ENCODE measurements at regions of chr12 and their contacts with region 1.

Region 1: DNA sequence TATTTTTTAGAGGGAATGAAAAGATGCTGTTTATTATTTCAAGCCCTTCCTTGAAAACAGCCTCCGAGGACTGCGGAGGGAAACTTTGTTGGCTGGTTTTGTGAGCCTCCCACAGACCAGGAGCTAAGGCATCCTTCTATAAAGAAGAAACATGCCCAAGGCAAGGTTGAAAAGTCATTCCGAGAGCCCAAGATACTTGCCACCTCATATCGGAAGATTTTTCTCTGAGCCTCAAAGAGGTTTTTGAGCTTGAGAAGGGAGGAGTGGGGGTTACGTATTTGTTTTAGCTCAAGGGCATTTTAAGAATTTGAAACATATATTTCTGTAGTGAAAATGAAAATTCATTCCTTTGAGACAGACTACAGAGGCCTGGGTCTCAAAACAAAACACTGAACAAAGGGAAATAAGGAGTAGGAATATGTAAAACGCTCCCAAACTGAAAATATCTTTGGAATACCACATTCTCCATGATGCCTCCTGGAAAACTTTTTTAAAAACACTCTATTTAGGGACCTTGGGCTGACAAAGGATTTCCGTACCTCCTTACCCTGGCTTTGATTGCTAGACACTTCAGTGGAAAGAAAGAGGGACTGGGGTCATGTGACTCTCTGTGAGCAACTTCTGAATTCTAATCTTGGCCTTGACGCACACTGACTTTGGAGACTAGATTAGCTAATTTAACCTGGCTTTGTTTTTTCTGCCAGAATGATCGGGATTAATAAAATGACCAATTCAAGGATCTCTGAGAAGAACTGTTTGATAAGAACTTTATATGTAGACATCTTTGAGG is 180.9 kb downstream of the SRGAP1 start:
- DNase-seq: peak; percentile 28
- H3K4me3 ChIP-seq: no peak overlapping the region
- H3K27ac ChIP-seq: no peak overlapping the region
- H3K4me1 ChIP-seq: no peaks in the 10 kb centered on the region
- H3K27me3 ChIP-seq: no peaks in the 10 kb centered on the region
- CTCF ChIP-seq: no peak

Region 2: DNA sequence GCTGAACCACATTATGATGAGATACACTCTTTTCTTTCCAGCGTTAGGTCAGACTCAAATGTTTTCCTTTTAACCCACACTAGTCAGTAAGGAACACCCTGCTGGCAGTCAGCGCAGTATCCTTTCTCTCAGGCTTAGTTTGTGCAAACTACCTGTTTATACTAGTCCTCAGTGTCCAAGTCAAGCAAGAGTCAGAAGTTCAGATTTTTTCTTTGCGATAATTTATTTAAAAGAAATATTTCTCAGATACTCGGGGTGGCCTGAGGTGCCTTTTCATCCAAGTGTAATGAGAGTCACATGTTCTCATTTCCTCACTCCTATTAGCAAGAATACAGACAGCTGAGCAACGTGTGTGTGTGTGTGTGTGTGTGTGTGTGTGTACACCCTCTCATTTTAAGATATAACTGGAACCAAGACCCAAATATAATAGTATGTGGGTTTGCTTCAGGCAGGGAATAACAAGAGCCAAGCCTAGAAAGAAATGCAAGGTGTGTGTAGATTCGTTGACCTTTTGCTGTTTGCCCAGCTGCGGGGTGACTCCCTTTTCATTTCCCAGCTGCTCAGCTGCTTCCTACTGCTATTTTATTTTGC is 14.0 kb after region 1 on chr12:
- CTCF ChIA-PET with region 1: no interaction called
- dilution Hi-C with region 1: no loop called
- in situ Hi-C with region 1: no loop called
- intact Hi-C with region 1: loop called (anchors 2 kb)
- DNase-seq: peak; percentile 52
- H3K4me3 ChIP-seq: peak overlapping the region in 1 of 3 experiments; percentile 23
- H3K27ac ChIP-seq: peak overlapping the region; percentile 7
- H3K4me1 ChIP-seq: peaks cover 12% of the 10 kb centered on the region
- H3K27me3 ChIP-seq: no peaks in the 10 kb centered on the region
- CTCF ChIP-seq: peak in 1 of 2 donors; percentile 6